Heart left ventricle (tissue), 16 donors: ENCODE measurements at regions of chr11 and their contacts with region 1.

Region 1: GRCh38 chr11:44286268-44286880 is 23.6 kb downstream of the ALX4 start:
- DNase-seq: peak in 4 of 5 donors; percentile 51 to 66 (median 58)
- ATAC-seq: peak; percentile 37 to 80 (median 71)
- H3K4me3 ChIP-seq: no peak overlapping the region
- H3K27ac ChIP-seq: no peak overlapping the region
- H3K4me1 ChIP-seq: no peaks in the 10 kb centered on the region
- H3K27me3 ChIP-seq: no peaks in the 10 kb centered on the region
- CTCF ChIP-seq: peak; percentile 86 to 98 (median 95)
- POLR2A ChIP-seq: no peak

Region 2: DNA sequence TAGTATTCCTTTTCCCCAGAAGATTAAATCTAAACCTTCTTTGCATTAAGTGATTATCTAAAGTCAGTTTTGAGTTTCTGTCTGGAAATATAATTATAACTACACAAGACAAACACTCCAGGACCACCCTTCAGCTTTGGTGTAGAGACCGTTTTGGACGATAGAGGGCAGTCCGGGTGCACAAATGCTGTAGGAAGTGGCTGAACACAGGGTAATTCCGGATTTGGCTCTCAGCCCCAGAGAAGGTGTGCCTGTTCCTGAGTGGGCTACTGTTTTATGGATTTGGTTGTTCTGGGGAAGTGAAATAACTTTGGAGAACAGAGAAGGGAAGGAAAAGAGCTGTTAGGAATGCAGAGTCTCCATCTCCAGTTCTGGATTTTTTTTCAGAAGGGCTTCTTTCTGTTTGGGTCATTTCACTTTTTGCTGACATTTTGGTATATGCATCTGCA is 176.1 kb before region 1 on chr11:
- intact Hi-C with region 1: loop called in 2 of 10 experiments (anchors 10 kb)
- DNase-seq: peak; percentile 46 to 77 (median 70)
- ATAC-seq: peak; percentile 53 to 85 (median 78)
- H3K4me3 ChIP-seq: no peak overlapping the region
- H3K27ac ChIP-seq: no peak overlapping the region
- H3K4me1 ChIP-seq: peaks cover 7 to 38% (median 19%) of the 10 kb centered on the region in 12 donors
- H3K27me3 ChIP-seq: no peaks in the 10 kb centered on the region
- CTCF ChIP-seq: peak; percentile 69 to 88 (median 78)
- POLR2A ChIP-seq: no peak

Region 3: DNA sequence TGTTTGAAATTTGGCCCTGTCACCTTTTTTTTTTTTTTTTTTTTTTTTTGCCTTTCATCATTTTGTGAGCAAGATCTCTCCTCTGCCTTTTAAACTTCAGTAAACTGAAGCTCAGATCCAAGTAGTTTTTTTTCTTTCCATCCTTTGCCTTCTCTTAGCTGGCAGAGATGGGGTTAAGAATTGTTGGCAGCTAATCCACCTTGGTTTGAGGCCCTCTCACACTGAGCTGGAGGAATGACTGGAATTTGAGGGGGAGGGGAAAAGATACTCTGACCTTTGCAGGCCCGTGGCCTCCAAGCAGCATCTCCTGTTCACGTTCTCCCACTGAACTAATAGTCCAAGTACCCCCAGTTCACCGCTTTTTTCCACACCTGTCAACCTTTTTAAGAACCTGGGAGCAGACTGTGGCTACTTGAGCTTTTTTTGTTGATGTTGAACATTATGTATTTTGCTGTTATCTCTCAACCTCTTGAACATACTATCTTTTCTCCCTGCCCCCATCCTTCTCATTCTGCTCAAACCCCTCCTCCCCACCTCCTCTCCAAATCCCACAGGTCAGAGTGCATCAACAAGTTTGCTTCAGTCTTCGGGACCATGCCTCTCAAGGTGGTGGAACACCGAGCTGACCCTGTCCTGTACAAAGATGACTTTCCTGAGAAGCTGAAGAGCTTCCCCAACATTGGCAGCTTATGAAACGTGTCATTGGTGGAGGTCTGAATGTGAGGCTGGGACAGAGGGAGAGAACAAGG is 42.6 kb before region 1 on chr11:
- intact Hi-C with region 1: no loop called
- DNase-seq: no peak
- ATAC-seq: peak in 2 of 4 donors; percentile 35 to 54
- H3K4me3 ChIP-seq: no peak overlapping the region
- H3K27ac ChIP-seq: peak overlapping the region in 2 of 12 donors; percentile 13 to 39
- H3K4me1 ChIP-seq: peaks cover 0 to 65% (median 35%) of the 10 kb centered on the region in 12 donors
- H3K27me3 ChIP-seq: no peaks in the 10 kb centered on the region
- CTCF ChIP-seq: no peak
- POLR2A ChIP-seq: no peak

Region 4: DNA sequence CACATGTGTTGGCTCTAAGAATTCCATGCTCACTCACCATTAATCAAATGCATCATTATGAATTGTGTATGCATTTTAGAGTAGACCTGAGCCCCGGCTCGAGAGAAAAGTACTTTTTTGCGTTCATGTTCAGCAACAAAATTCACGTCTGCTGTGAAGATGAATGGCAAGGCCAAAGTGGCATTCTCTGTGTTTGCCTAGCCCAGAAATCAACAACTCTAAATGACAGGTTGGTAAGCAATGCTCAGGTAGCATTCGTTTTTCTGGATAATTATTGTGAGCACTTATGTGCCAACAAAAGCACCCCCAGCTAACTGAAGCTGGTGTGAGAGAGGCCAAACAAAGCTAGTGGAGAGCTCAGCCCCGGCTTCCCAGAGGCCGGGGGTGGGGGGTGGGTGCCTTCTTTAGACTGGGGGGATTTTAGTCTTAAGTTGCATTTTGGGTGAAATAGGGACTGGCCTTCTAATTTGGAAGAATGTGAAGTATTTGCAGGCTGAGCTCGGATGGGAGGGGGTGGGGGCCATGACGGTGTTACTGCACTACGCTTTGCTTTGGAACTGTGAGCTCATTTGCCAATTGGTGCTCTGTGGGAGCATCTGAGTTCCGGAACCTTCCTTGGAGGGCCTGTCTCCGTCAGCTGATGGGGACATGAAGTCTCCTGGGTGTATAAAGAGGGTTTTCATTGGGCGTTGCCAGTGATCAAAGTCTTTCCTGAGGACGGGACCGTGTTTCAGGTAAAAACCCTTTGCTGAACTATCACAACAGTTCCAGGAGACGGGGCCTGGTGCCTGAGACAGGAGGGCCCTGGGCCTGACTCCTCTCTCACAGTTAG is 52.5 kb after region 1 on chr11:
- intact Hi-C with region 1: no loop called
- DNase-seq: no peak
- ATAC-seq: no peak
- H3K4me3 ChIP-seq: no peak overlapping the region
- H3K27ac ChIP-seq: peak overlapping the region in 2 of 12 donors; percentile 13 to 17
- H3K4me1 ChIP-seq: peaks cover 0 to 6% (median 0%) of the 10 kb centered on the region in 12 donors
- H3K27me3 ChIP-seq: peaks cover 0 to 57% (median 11%) of the 10 kb centered on the region in 9 donors
- CTCF ChIP-seq: no peak
- POLR2A ChIP-seq: no peak

Region 5: GRCh38 chr11:44483919-44484610 is 197.7 kb after region 1 on chr11:
- intact Hi-C with region 1: loop called in 3 of 10 experiments (anchors 2 to 5 kb)
- DNase-seq: peak in 1 of 5 donors; percentile 19
- ATAC-seq: peak in 3 of 4 donors; percentile 24 to 62 (median 40)
- H3K4me3 ChIP-seq: no peak overlapping the region
- H3K27ac ChIP-seq: no peak overlapping the region
- H3K4me1 ChIP-seq: no peaks in the 10 kb centered on the region
- H3K27me3 ChIP-seq: no peaks in the 10 kb centered on the region
- CTCF ChIP-seq: peak in 10 of 12 donors; percentile 20 to 54 (median 40)
- POLR2A ChIP-seq: no peak

Region 6: GRCh38 chr11:44538375-44539054 is 252.1 kb after region 1 on chr11:
- intact Hi-C with region 1: loop called (anchors 1 to 2 kb)
- DNase-seq: peak; percentile 76 to 83 (median 80)
- ATAC-seq: peak; percentile 92 to 94 (median 92)
- H3K4me3 ChIP-seq: peak overlapping the region in 3 of 12 donors; percentile 5 to 26 (median 11)
- H3K27ac ChIP-seq: no peak overlapping the region
- H3K4me1 ChIP-seq: peaks cover 0 to 9% (median 0%) of the 10 kb centered on the region in 12 donors
- H3K27me3 ChIP-seq: no peaks in the 10 kb centered on the region
- CTCF ChIP-seq: peak; percentile 90 to 99 (median 96)
- POLR2A ChIP-seq: no peak

Region 7: GRCh38 chr11:44611687-44612434 is 325.5 kb after region 1 on chr11:
- intact Hi-C with region 1: loop called in 2 of 10 experiments (anchors 10 kb)
- DNase-seq: peak in 2 of 5 donors; percentile 40 to 46
- ATAC-seq: peak in 3 of 4 donors; percentile 33 to 65 (median 38)
- H3K4me3 ChIP-seq: no peak overlapping the region
- H3K27ac ChIP-seq: peak overlapping the region in 10 of 12 donors; percentile 12 to 71 (median 37)
- H3K4me1 ChIP-seq: peaks cover 0 to 64% (median 32%) of the 10 kb centered on the region in 12 donors
- H3K27me3 ChIP-seq: no peaks in the 10 kb centered on the region
- CTCF ChIP-seq: no peak
- POLR2A ChIP-seq: no peak